K562 (cell line): ENCODE measurements at regions of chr2 and their contacts with region 1.

Region 1: DNA sequence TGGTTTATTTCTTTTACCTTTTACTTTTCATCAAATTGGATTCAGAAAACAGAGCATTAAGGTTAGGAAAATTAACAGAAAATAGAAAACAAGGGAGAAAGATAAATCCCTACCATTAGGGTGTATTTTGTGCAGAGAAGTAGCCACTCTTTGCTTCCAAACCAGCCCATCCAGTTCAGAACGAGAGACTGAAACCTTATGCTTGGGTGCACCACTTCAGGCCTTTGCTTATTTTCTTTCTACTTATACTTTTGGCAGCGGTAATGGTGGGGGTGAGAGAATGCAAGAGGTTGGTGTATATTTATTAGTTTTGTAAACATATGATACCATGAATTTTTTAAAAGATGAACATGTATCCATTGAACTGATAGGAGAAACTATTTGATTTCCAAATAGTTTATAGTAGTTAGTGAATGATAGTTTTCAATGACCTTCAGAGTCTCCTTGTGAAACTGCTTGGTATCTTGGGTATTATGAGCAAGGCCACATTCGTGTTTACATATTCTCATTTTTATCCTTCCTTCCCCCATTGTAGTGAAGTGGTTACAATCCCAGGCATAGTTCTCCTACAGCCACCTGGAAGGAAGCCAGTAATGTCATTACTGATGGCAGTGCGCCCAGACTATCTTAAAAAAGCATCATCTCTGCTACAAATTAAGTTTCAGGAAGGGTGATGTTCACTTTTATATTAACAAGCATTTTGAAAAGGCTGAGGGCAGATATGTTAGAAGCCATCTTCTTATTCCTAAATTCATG is 60.8 kb downstream of the MFSD6 start:
- DNase-seq: peak; percentile 50 to 86 (median 63)
- ATAC-seq: peak; percentile 87
- H3K4me3 ChIP-seq: no peak overlapping the region
- H3K27ac ChIP-seq: peak overlapping the region; percentile 65
- H3K4me1 ChIP-seq: peaks cover 16 to 43% of the 10 kb centered on the region in 2 experiments
- H3K27me3 ChIP-seq: no peaks in the 10 kb centered on the region
- CTCF ChIP-seq: no peak
- EP300 ChIP-seq: peak; percentile 52; the same call in 1 of the 2 replicates
- POLR2A ChIP-seq: no peak
- RAD21 ChIP-seq: no peak

Region 2: DNA sequence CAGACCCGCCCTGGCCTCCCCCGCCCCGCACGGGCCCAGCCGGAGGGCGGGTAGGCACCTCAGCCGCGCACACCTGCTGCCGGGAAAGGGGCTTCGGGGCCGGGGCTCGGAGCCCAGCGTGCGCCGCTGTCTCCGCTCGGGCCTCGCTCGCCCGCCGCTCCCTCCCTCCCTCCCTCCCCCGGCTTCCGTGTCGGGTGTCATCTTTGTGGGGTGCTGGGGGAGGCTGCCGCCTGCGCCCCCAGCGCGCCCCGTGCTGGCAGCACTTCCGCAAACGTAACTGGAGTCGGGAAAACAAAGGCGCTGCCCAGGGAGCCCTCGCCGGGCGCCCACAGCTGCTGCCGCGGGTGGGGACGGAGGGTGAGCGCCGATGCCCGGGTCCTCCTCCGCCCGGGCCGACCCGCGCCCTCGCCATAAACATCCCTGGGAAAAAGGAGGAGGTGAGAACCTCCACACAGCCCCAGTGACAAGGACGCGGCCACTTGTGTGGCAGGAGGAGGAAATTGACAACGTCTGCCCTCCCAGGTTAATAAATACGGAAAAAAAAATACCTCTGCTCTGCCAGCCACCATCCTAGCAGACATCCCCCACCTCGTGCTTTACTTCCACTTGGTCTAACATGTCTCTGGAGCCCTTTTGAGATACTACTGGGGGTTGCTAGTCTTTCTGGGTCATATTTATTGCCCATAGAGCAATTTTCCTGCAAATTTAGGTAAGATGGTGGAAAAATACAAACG is 60.3 kb before region 1 on chr2:
- CTCF ChIA-PET with region 1: no interaction called
- POLR2A ChIA-PET with region 1: no interaction called
- in situ Hi-C with region 1: no loop called
- intact Hi-C with region 1: loop called (anchors 10 kb)
- DNase-seq: peak; percentile 40 to 57 (median 52)
- ATAC-seq: peak; percentile 50
- H3K4me3 ChIP-seq: peak overlapping the region; percentile 57
- H3K27ac ChIP-seq: peak overlapping the region; percentile 32; the same call in 1 of the 3 replicates
- H3K4me1 ChIP-seq: peaks cover 14 to 27% of the 10 kb centered on the region in 2 experiments; a peak in 4 of 5 replicates
- H3K27me3 ChIP-seq: no peaks in the 10 kb centered on the region
- CTCF ChIP-seq: no peak
- EP300 ChIP-seq: no peak
- POLR2A ChIP-seq: no peak
- RAD21 ChIP-seq: no peak